ENCODE measurements at regions of chr11 and their contacts with region 1.

Region 1: GRCh38 chr11:121417055-121417551 is 35.0 kb upstream of the SORL1 start:
- DNase-seq: peak; percentile 83
- H3K4me3 Mint-ChIP-seq: peak overlapping the region; percentile 42
- H3K27ac Mint-ChIP-seq: peak overlapping the region; percentile 72
- H3K4me1 Mint-ChIP-seq: peaks cover 55% of the 10 kb centered on the region
- H3K27me3 Mint-ChIP-seq: no peaks in the 10 kb centered on the region

Region 2: DNA sequence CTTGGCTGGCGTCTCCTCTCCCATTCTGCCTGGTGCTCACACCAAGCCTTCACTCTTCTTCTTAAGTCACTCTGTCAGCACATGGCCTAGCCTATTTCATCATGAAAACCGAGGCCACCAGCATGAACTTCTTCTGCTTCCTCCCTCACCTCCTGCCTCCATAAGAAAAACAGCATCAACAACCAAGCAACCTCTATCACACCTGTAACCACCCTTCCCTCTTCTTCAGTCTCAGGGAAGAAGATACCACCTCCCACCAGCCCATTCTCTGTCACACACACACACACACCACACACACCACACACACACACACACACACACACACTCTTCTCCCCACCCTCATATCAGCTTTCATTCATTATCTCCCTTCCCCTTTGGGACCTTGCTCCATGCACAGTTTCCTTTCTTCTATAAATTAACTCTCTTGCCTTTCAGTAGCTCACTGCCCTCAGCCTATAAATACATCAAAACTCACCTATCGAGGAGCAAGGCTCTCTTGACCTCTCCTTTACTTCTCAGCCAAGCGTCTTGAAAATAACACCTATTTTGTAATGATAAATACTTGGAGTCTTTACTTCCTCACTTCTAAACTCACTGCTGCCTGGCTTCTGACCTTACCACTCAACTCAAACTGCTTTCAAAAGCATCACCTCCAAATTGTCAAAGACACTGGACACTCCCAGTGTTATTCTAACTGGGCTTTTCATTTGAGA is 88.0 kb before region 1 on chr11:
- intact Hi-C with region 1: loop called (anchors 5 kb)
- DNase-seq: peak; percentile 70
- H3K4me3 Mint-ChIP-seq: no peak overlapping the region
- H3K27ac Mint-ChIP-seq: no peak overlapping the region
- H3K4me1 Mint-ChIP-seq: peaks cover 4% of the 10 kb centered on the region
- H3K27me3 Mint-ChIP-seq: peaks cover 7% of the 10 kb centered on the region

Region 3: GRCh38 chr11:121372671-121373429 is 44.3 kb before region 1 on chr11:
- intact Hi-C with region 1: loop called (anchors 5 kb)
- DNase-seq: peak; percentile 76
- H3K4me3 Mint-ChIP-seq: peak overlapping the region; percentile 49
- H3K27ac Mint-ChIP-seq: peak overlapping the region; percentile 66
- H3K4me1 Mint-ChIP-seq: peaks cover 43% of the 10 kb centered on the region
- H3K27me3 Mint-ChIP-seq: no peaks in the 10 kb centered on the region